ENCODE measurements at regions of chr6 and their contacts with region 1.

Region 1: DNA sequence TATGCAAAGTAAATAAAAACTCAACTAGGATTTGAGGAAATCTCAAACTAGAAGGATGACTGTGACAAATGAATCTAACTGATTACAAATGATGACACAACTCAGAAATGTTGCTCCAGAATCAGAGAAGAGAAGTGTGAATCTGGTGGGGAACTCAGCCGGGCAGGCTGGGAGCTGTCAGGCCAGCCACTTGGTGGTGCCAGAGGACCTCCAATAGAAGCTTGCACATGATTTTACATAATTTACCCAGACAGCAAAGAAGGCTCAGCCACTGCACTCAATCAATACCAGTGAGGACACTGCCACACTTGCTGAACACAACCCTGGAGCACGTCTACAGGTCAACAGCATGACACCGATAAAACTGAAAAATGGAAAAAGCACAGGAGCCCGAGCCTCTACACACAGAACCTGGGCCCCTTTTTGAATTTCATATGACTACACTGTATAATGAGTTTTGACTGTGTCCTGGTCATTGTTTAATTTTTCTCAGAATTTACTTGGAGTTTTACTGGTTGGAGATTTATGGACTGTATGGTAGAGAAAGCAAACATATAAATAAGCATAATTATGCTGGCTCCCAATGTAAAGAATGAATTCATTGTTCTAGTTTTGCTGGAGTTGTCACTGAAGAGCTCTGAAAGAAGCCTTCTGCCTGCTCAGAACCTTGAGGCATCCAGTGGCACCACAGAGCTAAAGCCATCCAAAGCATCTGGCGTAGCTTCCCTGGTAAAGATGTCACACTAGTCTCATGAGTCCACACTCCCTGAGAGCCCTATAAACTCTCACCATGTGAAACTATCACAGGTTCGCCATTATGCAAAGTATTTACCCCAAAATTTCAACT is 296.5 kb downstream of the THBS2 start:
- DNase-seq: peak; percentile 49
- H3K4me3 ChIP-seq: no peak overlapping the region
- H3K27me3 ChIP-seq: no peaks in the 10 kb centered on the region
- CTCF ChIP-seq: peak; percentile 84

Region 2: GRCh38 chr6:168851460-168852375 is 105.4 kb before region 1 on chr6:
- CTCF ChIA-PET with region 1: no interaction called
- POLR2A ChIA-PET with region 1: no interaction called
- DNase-seq: no peak
- H3K4me3 ChIP-seq: peak overlapping the region; percentile 38
- H3K27me3 ChIP-seq: no peaks in the 10 kb centered on the region
- CTCF ChIP-seq: no peak

Region 3: DNA sequence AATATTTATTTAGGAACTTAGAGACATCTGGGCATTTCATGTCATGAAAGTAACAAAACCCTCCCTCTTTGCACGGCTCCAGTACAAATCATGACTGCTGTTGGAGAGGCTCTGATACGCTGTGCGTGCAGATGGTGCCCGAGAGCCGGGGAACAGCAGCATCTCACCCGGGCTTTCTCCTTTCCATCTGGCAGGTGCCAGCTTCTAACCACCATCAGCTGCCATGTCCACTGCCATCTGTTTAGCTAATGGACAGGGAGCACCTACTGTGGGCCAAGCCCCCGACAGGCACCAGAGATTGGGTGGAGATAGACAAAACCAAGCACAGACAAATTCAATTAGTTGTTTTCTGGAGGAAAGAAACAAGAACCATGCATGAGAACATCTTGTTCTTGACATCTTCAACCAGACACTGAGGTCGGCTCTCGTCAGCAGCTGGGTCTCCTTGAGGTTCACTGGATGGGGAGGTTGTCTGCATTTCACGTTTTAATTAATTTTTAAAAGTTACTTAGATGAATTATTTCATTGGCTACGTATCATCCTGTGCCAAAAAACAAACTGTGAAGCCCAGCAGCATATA is 27.1 kb before region 1 on chr6:
- CTCF ChIA-PET with region 1: no interaction called
- POLR2A ChIA-PET with region 1: no interaction called
- DNase-seq: no peak
- H3K4me3 ChIP-seq: no peak overlapping the region
- H3K27me3 ChIP-seq: no peaks in the 10 kb centered on the region
- CTCF ChIP-seq: no peak

Region 4: DNA sequence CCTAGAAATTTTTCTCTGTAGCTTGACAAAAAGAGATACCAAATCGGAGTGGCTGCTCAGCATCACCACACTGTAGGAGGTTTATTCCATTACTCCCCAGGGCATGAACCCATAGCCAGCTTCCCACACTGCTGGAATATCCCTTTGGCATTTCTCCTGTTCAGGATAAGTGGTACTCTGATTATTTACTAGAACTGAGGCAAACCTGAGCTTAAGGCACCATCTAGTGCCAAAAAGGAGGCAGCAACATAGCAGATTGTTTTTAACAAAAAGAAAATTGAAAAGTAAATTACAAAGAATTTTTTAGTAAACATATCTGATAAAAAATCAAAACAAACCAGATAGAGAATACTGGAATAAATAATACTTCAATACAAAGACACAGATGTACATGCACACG is 563.0 kb after region 1 on chr6:
- CTCF ChIA-PET with region 1: interaction called, 41 read pairs
- POLR2A ChIA-PET with region 1: no interaction called
- DNase-seq: no peak
- H3K4me3 ChIP-seq: no peak overlapping the region
- H3K27me3 ChIP-seq: no peaks in the 10 kb centered on the region
- CTCF ChIP-seq: peak; percentile 65